Ascending aorta (tissue), 2 donors: ENCODE measurements at regions of chr7 and their contacts with region 1.

Region 1: DNA sequence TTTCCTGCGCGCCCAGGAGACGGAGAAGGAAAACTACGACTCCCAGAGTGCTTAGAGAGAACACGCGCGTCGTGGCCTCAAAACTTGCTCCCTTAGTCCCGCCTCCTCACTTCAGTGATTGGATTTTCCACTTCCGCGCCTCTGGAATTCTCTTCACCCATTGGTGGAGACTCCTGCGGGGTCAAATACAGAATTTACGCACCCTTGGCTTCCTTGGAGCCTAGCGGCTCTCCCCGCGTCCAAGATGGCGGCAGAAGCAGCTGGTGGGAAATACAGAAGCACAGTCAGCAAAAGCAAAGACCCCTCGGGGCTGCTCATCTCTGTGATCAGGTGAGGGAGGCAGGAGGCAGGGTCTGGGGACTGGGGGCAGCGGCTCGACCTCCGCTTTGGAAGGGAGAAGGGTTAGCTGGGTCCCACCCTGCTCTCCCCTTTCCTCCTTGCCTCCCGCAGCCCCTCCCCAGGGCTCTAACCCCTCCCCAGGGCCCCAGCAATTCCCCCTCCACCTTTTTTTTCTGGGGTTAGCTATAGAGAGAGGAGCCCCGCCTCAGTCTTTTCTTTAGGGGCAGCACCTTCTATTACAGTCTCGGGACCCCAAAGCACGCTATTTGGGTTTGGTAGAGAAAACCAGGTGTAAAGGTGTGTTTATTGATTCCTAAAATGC is at the start of gene EXOC4:
- DNase-seq: peak; percentile 69 to 96
- H3K4me3 ChIP-seq: peak within 1 kb of the TSS; percentile 87 to 99
- H3K27ac ChIP-seq: peak within 1 kb of the TSS; percentile 81 to 85
- H3K4me1 ChIP-seq: peaks cover 0 to 2% of the 10 kb centered on the region in 2 donors
- H3K27me3 ChIP-seq: no peaks in the 10 kb centered on the region
- CTCF ChIP-seq: no peak
- total RNA-seq, gene EXOC4: 27.1 TPM

Region 2: DNA sequence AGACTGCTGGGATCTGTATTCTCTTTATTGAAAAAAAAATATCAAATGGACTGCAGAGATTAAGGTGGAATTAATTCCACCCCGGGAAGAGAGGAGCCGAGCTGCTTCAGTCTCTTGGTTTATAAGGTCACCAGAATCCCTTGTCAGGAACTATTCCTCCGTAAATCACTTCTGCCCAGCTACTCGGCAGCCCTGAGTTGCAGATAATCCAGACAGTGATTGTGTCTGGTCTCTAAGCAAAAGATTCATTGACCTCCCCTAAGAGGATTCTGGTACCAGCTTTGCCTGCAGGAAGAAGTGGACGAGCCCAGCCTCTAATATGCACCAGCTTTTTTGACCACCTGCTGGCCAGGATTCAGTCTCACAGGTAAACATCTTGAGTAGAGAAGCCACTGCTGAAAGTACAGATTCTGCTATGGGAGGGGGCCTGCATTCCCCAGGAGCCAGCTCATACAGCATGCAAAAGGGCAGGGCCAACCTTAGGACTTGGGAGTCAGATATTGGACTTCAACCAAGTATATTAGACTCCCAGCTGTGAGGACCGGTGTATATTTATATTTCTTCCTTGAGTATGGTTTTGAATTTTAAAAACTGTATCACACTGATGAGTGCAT is 649.7 kb before region 1 on chr7:
- intact Hi-C with region 1: no loop called
- DNase-seq: no peak
- H3K4me3 ChIP-seq: no peak overlapping the region
- H3K27ac ChIP-seq: no peak overlapping the region
- H3K4me1 ChIP-seq: no peaks in the 10 kb centered on the region
- H3K27me3 ChIP-seq: no peaks in the 10 kb centered on the region
- CTCF ChIP-seq: no peak

Region 3: DNA sequence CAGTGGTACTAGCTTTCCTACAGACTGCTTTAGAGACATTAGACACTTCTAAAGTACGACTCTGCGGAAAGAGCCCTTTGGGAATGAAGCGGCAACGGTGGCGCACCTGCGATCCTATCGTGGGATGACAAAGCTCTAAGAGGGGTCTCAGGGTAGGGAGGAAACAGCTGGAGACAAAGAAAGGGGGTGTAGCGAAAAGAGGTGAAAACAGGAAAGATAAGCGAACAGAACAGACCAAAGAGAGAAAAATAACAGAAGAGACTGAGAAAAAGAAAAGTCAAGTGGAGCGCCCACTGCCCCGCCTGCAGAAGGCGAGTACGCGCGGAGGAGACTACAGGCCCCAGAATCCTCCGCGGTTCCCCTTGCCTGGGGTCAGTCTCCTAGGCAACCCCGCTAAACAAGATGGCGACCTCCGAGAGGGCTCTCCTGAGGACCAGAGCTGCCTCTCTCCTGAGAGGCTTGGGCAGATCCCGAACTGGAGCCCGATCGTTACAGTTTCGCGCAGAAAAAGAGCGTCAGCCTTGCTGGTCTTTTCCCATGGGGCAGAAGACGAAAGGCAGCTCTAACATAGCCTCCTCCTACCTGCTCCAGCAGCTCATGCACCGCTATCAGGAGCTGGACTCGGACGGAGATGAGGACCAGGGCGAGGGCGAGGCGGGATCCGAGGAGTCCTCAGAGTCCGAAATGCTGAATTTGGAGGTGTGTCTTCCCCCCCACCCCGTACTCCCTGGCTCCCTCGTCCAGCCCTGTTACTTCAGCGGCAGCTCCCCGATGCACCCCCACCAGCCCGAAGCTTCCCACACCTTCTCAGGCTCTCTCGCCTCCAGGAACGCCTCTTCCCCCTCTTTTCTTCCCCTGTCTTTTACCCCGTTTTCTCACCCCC is 874.2 kb after region 1 on chr7 and contains the start of gene LRGUK:
- intact Hi-C with region 1: loop called (anchors 5 kb)
- DNase-seq: peak; percentile 23 to 86
- H3K4me3 ChIP-seq: peak within 1 kb of the TSS; percentile 59 to 72
- H3K27ac ChIP-seq: no peak within 1 kb of the TSS
- H3K4me1 ChIP-seq: peaks cover 0 to 2% of the 10 kb centered on the region in 2 donors
- H3K27me3 ChIP-seq: no peaks in the 10 kb centered on the region
- CTCF ChIP-seq: no peak
- total RNA-seq, gene LRGUK: not detected

Region 4: DNA sequence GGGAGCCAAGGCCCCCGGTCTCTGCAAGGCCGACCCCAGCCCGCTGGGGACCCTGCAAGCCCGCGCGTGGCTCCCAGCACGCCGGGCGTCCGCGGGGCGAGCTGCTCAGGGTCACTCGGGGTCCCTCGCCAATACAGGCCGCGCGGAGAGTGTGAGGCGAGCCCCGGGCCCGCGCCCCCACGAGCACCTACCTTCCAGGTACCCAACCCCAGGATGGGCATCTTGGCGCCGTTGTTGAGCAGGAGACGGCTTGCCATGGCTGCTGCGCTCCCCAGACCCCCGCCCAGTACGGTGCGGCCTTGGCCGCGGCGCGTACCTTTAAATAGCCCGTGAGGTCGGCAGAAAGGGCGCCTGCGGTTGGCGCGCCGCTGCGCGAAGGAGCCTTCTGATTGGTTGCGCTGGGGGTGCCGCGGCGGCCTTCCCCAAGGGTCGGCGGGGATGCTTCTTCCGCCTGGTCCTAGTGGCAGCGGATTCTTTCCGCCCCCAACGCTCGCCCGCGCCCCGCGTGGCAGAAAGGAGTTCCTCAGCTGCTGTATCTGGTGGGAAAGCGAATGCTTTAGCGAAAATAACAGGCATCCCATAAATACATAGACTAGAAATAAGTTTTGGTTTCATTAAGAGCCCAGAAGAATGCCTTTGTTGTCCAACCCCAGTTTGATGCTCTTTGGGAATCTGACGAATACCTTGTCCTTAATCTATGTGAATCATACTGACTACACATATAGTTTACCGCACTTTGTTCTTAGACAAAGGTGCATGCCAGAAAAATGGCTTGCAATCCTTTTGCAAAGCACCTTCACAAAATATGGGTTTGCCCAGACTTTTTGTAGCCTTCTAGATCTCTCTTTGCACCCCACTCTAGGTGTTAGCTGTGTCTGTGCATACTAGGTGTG is 1206.1 kb after region 1 on chr7 and contains the start of gene AKR1B1:
- intact Hi-C with region 1: loop called (anchors 10 kb)
- DNase-seq: peak; percentile 66 to 97
- H3K4me3 ChIP-seq: peak within 1 kb of the TSS; percentile 77 to 79
- H3K27ac ChIP-seq: peak within 1 kb of the TSS; percentile 83 to 91
- H3K4me1 ChIP-seq: peaks cover 2 to 11% of the 10 kb centered on the region in 2 donors
- H3K27me3 ChIP-seq: no peaks in the 10 kb centered on the region
- CTCF ChIP-seq: peak; percentile 49 to 75 (median 52)
- total RNA-seq, gene AKR1B1: 78.7 TPM